ENCODE measurements at regions of chr1 and their contacts with region 1.

Region 1: DNA sequence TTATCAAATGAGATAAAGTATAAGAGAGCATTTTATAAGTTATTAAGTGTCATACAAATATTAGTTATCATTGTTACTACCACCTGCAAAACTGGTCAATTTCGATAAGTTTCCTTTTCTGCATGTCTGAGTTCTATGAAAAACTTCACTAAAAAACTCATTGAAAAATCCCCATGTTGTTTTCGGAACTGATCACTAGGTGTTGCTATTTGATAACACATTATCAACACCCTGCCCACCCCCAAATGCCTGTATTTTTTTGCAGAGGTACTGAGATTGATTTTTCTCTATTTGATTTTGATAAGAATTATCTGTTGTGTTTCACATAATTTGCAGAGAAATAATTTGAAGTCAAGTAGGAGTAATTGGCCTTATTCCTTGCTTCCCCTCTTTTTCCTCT is 22.1 kb upstream of the DISP1 start:
- DNase-seq: no peak

Region 2: GRCh38 chr1:222814536-222815439 is 22.0 kb after region 1 on chr1 and contains the start of gene DISP1:
- intact Hi-C with region 1: loop called (anchors 2 kb)
- DNase-seq: peak; percentile 56 to 96 (median 78)

Region 3: DNA sequence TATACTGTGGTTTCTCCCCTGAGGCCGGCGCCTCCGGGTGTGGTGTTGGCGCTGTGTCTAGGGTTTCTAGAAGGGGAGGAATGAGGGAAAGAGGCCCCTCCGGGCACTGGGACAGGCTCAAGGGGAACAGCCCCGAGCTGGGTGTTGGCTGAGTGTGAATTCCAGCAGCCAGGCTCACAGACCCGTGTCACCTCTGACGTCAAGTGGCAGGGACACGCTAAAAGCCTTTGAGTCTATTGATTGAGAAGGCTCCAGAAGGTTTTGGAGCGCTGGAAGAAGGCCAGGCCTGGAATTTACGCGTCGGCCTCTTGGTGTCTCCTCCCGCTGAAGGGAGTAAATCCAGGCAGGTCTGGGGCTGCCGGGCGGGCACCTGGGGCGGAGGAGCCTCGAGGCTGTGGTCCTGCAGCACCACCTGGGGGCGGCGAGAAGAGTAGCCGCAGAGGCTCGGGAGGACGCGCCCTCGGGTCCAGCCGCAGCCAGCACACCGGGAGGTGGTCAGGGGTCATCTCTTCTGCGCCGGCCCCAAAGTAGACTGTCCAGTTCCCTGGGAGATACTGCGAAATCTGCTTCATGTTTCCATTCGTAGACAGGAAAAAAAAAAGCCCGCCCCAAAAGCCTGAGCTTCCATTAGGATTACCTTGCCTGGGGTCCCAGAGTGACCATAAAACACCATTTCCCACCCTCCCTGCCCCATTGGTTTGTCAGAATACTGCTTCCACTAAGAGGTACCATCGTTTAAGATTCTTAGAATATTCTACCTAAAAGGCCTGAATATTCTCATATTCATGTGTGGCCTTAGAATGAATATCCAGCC is 288.6 kb after region 1 on chr1:
- intact Hi-C with region 1: loop called (anchors 2 kb)
- DNase-seq: peak; percentile 51 to 97 (median 74)

Region 4: DNA sequence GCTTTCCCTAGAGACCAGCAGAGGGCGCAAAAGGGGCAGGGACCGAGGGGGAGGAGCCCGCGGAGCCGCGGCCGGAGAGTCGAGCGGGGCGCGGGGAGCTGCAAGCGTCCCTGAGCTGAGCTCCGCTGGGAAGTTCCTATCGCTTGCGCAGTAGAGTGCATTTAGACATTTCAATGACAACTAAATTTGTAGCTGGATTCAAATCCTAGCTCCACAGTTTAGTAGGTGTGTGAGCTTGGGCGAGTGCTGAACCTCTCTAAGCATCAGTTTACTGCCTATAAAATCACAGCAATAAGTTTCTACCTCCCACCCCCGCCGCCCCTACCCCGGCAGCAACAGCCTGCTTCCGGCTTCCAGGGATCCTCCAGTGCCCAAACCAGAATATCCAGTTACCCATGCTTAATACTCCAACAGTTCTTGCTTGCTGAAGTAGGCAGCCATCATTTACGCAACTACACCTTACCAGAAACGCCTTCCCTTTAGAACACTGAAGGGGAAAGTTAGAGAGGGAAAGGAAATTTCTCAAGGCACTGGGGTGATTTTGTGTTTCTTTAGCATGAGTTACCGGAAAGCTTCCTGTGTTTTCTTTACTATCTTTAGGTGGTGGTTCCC is 341.2 kb after region 1 on chr1:
- intact Hi-C with region 1: loop called (anchors 5 kb)
- DNase-seq: peak; percentile 67 to 97 (median 84)

Region 5: GRCh38 chr1:223161321-223161720 is 368.6 kb after region 1 on chr1:
- intact Hi-C with region 1: no loop called
- DNase-seq: no peak

Region 6: DNA sequence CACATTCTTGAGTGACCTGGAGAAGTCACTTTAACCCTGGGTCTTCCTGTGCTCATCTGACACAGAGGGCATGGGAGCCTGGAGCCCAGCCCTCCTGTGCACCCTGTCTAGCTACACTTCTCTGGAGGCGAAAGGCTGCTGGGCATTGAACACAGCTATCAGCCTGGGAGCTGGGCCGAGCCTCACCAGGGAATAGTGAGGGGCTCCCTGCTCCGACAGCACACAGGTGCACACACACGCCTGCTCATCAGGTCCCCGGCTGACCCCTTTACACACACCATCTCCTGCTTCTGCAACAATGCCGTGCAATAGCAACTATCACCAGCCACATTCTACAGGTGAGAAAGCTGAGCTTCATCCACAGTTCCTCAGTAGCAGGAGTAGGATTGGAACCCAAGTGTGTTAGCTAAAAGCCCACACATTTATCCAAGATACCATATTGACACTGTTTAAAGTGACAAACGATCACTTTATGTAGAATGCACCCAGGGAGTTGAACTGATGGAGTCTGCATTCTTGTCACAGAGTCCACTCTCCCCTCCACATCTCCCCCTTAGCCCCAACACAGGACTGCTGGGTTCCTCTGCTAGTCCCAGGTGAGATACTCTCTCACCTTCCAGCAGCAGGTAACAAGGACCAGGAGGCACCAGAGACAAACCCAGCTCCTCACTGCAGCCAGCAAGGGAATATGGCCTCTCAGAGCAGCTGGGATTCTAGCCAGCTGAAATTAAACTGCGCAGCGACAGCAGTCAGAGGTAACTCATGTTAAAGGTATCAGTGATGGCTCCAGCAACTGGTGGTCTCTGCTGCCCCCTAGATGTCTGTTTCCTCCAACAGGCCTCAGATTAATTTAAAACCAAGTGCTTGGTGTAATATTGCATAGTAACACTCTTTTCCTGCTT is 891.1 kb after region 1 on chr1:
- intact Hi-C with region 1: loop called (anchors 5 kb)
- DNase-seq: peak in 7 of 10 donors; percentile 38 to 88 (median 53)

Measured in posterior cingulate gyrus (tissue), 11 donors.